ENCODE measurements at regions of chr3 and their contacts with region 1.

Region 1: GRCh38 chr3:32551087-32551486 is 19.6 kb downstream of the DYNC1LI1 start:
- DNase-seq: no peak
- ATAC-seq: peak; percentile 18
- H3K4me3 Mint-ChIP-seq: peak overlapping the region; percentile 4
- H3K27ac Mint-ChIP-seq: peak overlapping the region; percentile 21
- H3K4me1 Mint-ChIP-seq: peaks cover 56% of the 10 kb centered on the region
- H3K27me3 Mint-ChIP-seq: no peaks in the 10 kb centered on the region
- CTCF ChIP-seq: no peak

Region 2: GRCh38 chr3:32531010-32531647 is 20.0 kb before region 1 on chr3:
- CTCF ChIA-PET with region 1: no interaction called
- POLR2A ChIA-PET with region 1: no interaction called
- intact Hi-C with region 1: loop called (anchors 2 kb)
- DNase-seq: no peak
- ATAC-seq: no peak
- H3K4me3 Mint-ChIP-seq: no peak overlapping the region
- H3K27ac Mint-ChIP-seq: no peak overlapping the region
- H3K4me1 Mint-ChIP-seq: peaks cover 1% of the 10 kb centered on the region
- H3K27me3 Mint-ChIP-seq: no peaks in the 10 kb centered on the region
- CTCF ChIP-seq: no peak

Region 3: DNA sequence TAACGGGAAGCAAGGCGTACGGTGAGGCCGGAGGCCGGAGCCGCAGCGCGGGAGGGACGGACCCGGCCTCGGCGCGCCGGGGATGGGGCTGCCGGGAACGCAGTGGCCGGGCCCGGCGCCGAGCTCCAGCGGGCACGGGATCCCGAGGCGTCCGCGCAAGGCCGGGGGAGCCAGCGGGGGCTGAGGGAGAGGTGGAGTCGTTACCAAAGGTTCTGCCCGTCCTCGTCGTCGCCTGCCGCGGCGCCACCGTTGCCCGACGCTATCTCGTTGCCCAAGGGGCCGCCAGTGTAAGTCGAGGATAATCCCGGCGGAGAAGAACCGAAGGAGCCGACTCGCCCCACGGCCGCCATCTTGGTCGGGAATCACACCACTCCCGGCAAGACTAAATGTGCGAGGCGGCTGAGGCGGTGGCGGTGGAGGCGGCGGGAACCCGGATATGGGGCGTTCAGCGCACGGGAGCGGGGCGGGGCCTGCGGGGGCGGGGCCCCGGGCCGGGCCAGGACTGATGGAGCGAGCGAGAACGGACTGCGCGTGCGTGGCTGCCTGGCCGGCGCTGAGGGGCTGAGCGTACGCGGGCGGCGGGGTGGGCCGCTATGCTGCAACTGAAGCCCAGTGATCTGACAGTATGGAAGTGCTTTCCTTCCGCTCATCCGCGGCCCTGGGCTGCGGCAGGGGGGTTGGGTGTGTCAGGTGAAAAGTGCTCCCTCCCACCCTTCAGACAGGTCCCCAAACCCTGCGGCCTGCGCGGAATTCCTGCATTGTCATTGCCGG is 19.5 kb after region 1 on chr3 and contains the start of gene DYNC1LI1:
- CTCF ChIA-PET with region 1: no interaction called
- POLR2A ChIA-PET with region 1: no interaction called
- intact Hi-C with region 1: loop called (anchors 1 kb)
- DNase-seq: peak; percentile 96
- ATAC-seq: peak; percentile 95
- H3K4me3 Mint-ChIP-seq: peak within 1 kb of the TSS; percentile 94
- H3K27ac Mint-ChIP-seq: peak within 1 kb of the TSS; percentile 93
- H3K4me1 Mint-ChIP-seq: peaks cover 32% of the 10 kb centered on the region
- H3K27me3 Mint-ChIP-seq: no peaks in the 10 kb centered on the region
- CTCF ChIP-seq: no peak
- total RNA-seq, gene DYNC1LI1: 32.6 and 38.8 TPM in 2 replicates

Region 4: DNA sequence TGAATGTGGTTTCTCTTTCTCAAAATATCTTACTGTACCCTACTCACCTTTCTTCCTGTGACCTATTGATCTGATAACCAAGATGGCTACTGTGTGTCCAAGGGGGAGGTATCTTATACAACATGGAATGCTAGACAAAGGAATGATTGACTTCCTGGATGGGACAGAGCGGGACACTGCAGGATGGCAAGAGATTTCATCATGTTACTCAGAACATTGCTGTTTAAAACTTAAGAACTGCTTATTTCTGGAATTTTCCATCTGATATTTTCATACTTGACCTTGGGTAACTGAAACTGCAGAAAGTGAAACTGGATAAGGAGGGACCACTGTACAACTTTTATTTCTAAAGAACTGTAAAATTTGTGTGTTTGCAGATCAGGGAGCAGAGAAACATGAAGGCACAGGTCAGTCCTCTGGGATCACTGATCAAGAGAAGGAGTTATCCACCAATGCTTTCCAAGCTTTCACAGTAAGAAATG is 152.4 kb after region 1 on chr3:
- CTCF ChIA-PET with region 1: no interaction called
- POLR2A ChIA-PET with region 1: no interaction called
- intact Hi-C with region 1: no loop called
- DNase-seq: no peak
- ATAC-seq: no peak
- H3K4me3 Mint-ChIP-seq: no peak overlapping the region
- H3K27ac Mint-ChIP-seq: no peak overlapping the region
- H3K4me1 Mint-ChIP-seq: peaks cover 33% of the 10 kb centered on the region
- H3K27me3 Mint-ChIP-seq: no peaks in the 10 kb centered on the region
- CTCF ChIP-seq: no peak

Measured in activated B cell treated with CpG ODN at 0.5 μM for 24 hours (primary cell).